Activated CD8-positive, alpha-beta memory T cell treated with anti-CD3 and anti-CD28 coated beads, Interleukin-2, amount 10 ng/mL, durations not matched to agents 7 days and 5 days (primary cell): ENCODE measurements at regions of chr1 and their contacts with region 1.

Region 1: DNA sequence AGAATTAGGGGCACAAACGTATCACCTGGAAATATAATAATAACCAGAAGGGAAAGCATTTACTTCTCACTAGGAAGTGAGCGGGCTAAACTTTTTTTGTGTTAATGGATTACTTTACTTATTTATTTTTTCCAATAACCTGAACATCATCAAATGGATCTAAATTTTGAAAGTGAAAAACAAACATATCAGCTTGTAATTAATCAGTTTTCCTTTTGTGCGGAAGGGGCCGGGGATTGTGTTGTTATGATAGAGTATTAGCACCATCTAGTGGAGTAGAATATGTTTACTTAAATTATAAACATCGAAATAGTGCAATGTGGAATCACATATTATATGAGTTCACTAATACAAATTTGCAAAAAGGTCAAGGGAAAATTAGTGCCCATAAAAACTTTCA is 9.0 kb downstream of the CFH start:
- DNase-seq: no peak
- ATAC-seq: peak; percentile 60
- H3K4me3 Mint-ChIP-seq: no peak overlapping the region
- H3K27ac Mint-ChIP-seq: no peak overlapping the region
- H3K4me1 Mint-ChIP-seq: peaks cover 2% of the 10 kb centered on the region
- H3K27me3 Mint-ChIP-seq: no peaks in the 10 kb centered on the region

Region 2: GRCh38 chr1:196148367-196148970 is 512.4 kb before region 1 on chr1:
- CTCF ChIA-PET with region 1: interaction called, 18 read pairs
- DNase-seq: no peak
- ATAC-seq: no peak
- H3K4me3 Mint-ChIP-seq: no peak overlapping the region
- H3K27ac Mint-ChIP-seq: no peak overlapping the region
- H3K4me1 Mint-ChIP-seq: no peaks in the 10 kb centered on the region
- H3K27me3 Mint-ChIP-seq: no peaks in the 10 kb centered on the region

Region 3: DNA sequence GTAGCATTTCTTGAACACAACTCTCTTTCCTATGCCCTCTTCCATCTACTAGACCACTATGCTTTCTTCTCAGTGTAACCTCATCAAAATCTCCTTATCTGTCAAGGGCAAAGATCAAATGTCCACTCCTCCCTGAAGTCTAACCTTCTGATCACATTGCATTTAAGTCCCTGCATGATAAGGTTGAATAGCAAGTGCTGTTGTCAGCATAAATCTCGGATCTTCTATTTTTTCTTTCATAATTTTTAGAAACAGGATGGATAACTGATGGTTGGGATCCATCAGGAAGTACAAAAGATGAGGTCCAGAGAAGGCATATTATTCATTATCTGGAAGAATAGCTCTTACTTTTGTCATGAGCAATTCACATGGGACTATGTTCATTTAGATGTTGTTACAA is 93.6 kb before region 1 on chr1:
- CTCF ChIA-PET with region 1: no interaction called
- DNase-seq: no peak
- ATAC-seq: no peak
- H3K4me3 Mint-ChIP-seq: no peak overlapping the region
- H3K27ac Mint-ChIP-seq: no peak overlapping the region
- H3K4me1 Mint-ChIP-seq: no peaks in the 10 kb centered on the region
- H3K27me3 Mint-ChIP-seq: peaks cover 4% of the 10 kb centered on the region

Region 4: DNA sequence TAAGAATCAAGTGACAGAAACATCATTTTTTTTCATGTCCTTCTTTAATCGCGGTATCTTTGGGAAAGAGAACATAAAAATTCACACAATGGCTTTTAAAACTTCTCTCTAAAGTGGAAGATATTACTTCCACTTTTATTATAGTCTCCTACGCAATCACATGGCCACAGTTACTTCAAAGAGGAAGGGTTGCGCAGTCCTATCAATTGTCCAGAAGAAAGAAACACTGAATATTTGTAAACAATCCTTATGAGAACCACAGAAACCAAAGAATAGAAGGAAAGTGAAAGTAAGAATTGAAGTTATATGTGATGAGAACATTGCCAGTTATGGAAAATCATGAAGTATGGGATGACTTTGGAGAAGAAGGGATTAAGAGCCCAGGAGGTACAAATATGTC is 23.6 kb after region 1 on chr1:
- CTCF ChIA-PET with region 1: no interaction called
- DNase-seq: no peak
- ATAC-seq: no peak
- H3K4me3 Mint-ChIP-seq: no peak overlapping the region
- H3K27ac Mint-ChIP-seq: no peak overlapping the region
- H3K4me1 Mint-ChIP-seq: no peaks in the 10 kb centered on the region
- H3K27me3 Mint-ChIP-seq: no peaks in the 10 kb centered on the region